BJ (cell line): ENCODE measurements at regions of chr11 and their contacts with region 1.

Region 1: DNA sequence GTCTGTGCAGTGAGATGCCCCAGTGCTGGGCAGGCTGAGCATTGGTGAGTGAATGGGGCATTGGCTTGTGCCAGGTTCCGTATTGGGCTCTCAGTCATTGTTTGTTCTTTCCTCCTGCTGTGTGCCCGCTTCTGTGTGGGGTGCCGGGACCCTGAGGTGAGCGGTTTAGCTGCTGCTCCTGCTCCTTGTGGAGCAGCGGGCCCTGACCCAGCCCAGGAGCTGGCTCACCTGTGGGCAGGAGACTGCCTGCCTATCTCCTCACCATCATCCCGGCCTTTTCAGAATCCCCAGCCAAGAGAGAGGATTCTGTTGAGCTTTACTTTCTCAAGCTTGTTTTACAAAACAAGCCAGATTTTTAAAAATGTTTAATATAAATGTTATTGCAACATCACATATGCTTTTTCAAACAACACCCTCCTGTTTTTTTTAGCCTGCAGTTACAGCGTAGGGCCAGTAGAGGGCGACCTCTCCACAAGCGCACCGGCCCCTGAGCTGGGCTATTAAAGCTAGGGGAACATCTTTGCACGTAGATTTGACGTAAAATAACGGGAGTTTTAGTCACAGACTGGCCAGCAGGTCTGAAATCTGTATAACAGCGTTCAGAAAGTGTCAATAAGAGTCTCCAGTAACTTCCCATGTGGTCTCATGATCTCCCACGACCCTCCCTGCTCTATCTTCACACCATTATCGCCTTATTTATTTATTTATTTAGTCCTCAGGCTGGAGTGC is 25.1 kb upstream of the RELT start:
- DNase-seq: no peak
- H3K4me3 ChIP-seq: no peak overlapping the region
- H3K27me3 ChIP-seq: no peaks in the 10 kb centered on the region
- CTCF ChIP-seq: peak; percentile 100

Region 2: DNA sequence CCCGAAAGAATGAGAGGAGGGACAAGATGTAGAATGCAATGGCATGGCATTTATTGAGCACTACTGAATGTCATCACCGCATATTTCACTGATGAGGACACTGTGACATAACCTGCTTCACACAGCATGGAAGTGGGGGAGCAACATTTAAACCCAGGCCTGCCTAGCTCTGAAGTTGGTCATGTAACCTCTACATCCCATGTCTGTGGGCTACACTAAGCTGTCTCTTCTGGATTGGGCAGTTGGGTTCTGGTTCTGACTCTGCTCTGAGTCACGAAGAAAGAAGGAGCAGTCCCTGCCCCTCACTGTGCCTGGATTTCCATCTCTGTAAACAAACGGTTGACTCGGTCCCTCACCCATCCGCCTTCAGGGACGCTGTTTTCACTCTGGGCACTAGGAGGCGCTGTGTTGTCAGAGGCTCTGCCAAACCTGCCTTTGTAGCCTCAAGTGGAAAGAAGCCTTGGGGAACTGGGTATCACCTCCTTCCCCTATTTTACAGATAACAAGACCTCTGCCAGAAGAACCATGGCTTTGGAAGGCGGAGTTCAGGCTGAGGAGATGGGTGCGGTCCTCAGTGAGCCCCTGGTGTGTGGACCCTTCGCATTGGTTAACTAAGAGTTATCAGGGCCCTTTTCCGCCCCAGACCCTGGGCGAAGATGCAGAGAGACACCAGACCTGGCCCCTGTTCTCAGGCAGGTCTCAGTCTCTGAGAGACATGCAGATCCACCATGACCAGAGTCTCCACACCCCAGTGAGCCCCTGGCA is 55.7 kb before region 1 on chr11:
- CTCF ChIA-PET with region 1: interaction called, 35 read pairs
- POLR2A ChIA-PET with region 1: no interaction called
- DNase-seq: peak; percentile 70
- H3K4me3 ChIP-seq: no peak overlapping the region
- H3K27me3 ChIP-seq: no peaks in the 10 kb centered on the region
- CTCF ChIP-seq: peak; percentile 98

Region 3: GRCh38 chr11:73325036-73325981 is 25.8 kb before region 1 on chr11:
- CTCF ChIA-PET with region 1: interaction called, 10 read pairs
- POLR2A ChIA-PET with region 1: interaction called, 3 read pairs
- DNase-seq: no peak
- H3K4me3 ChIP-seq: no peak overlapping the region
- H3K27me3 ChIP-seq: no peaks in the 10 kb centered on the region
- CTCF ChIP-seq: no peak

Region 4: DNA sequence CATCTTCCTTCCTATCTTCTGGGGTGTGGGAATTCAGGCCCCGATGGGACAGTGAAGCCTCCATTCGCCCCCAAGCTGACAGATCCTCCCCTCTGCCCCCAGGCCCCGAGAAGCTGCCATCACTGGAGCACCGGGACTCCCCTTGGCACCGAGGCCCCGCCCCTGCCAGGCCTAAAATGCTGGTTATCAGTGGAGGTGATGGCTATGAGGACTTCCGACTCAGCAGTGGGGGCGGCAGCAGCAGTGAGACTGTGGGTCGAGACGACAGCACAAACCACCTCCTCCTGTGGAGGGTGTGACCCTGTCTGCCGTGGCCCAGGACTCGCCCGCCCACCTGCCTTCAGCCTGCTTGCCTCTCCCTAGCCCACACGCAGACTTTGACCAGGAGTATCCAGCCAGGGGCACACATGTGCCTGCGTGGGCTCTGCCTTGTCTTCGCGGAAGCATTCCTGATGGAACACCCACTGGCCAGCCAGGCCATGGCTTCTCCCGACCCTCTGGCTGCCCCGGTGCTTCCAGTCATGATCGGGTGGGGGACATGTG is 16.5 kb after region 1 on chr11:
- CTCF ChIA-PET with region 1: interaction called, 78 read pairs
- POLR2A ChIA-PET with region 1: no interaction called
- DNase-seq: no peak
- H3K4me3 ChIP-seq: no peak overlapping the region
- H3K27me3 ChIP-seq: no peaks in the 10 kb centered on the region
- CTCF ChIP-seq: no peak

Region 5: GRCh38 chr11:73640592-73640991 is 289.5 kb after region 1 on chr11:
- CTCF ChIA-PET with region 1: no interaction called
- POLR2A ChIA-PET with region 1: interaction called, 14 read pairs
- DNase-seq: no peak
- H3K4me3 ChIP-seq: no peak overlapping the region
- H3K27me3 ChIP-seq: 0 out of 2 replicates have a peak, but pooled peaks cover 3% of the 10 kb centered on the region
- CTCF ChIP-seq: no peak